ENCODE measurements at regions of chr5 and their contacts with region 1.

Region 1: GRCh38 chr5:163564321-163564938 is 59.0 kb downstream of the MAT2B start:
- DNase-seq: peak in 2 of 3 donors; percentile 33 to 85
- ATAC-seq: peak; percentile 78
- H3K4me3 ChIP-seq: no peak overlapping the region
- H3K4me1 ChIP-seq: peaks cover 17% of the 10 kb centered on the region
- CTCF ChIP-seq: peak; percentile 68

Region 2: DNA sequence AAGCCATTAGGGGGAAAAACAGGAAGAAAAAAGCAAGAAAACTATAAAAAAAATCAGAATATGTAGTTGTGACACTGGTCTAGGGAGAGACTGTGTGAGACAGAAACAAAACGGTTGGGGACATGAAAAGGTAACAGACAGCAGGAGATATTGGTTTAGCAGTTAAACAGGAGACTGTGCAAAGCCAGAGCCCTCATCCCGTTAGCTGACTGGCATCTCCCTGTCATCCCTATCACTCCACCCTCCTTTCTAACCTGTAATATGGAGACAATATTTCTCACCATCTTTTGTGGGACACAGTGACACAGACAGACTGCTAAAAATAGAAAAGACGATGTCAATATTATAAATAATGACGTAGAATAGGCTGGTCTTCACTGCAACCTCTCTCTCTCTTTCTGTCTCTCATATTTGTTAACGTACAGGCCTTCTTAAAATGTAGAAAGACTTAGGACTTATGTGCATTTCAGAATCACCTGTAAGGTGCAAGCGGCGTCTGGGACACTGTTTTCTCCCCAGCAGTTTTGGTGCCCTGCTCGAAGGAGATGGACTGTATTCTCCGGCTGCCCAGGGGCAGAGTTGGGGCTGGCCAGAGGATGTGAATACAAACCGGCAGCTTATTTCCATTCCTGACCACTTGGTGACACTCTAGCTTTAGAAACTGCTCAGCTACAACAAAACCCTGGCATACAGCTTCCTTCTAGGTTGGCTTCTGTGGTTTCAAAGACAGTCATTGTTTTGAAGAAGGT is 131.6 kb after region 1 on chr5:
- intact Hi-C with region 1: loop called in 1 of 2 experiments (anchors 10 kb)
- DNase-seq: peak in 2 of 3 donors; percentile 27 to 68
- ATAC-seq: peak; percentile 92
- H3K4me3 ChIP-seq: no peak overlapping the region
- H3K4me1 ChIP-seq: no peaks in the 10 kb centered on the region
- CTCF ChIP-seq: peak; percentile 13

Region 3: DNA sequence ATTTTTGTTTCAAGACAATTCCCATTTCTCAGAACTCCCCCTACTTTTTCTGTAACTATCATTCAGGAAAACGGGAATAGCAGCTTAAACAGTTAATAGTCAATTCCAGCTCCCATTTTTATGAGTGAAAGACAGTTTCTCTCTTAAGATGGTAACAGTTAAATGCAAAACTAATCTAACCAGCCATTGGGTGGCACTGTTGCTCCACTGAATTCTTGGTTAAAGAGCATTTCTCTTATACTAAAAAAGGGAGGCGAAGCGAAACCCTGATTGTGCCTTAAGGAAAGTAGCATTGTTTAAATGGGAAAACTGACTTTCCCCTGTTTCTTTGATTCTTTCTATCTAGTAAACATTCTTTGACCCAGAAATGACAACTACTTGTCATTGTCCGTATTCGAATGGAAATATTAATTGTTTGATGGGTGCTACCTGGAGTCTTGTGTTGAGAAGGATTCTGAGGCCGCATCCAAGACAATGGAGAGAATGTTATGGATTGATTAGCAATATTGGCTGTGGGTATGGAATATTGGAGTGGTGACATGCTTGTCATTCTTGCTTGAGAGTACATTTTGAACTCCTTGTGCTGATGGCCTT is 448.7 kb after region 1 on chr5:
- intact Hi-C with region 1: loop called in 1 of 2 experiments (anchors 10 kb)
- DNase-seq: peak in 1 of 3 donors; percentile 85
- ATAC-seq: peak; percentile 51
- H3K4me3 ChIP-seq: no peak overlapping the region
- H3K4me1 ChIP-seq: no peaks in the 10 kb centered on the region
- CTCF ChIP-seq: no peak